Prostate gland (tissue), 2 donors: ENCODE measurements at regions of chr2 and their contacts with region 1.

Region 1: DNA sequence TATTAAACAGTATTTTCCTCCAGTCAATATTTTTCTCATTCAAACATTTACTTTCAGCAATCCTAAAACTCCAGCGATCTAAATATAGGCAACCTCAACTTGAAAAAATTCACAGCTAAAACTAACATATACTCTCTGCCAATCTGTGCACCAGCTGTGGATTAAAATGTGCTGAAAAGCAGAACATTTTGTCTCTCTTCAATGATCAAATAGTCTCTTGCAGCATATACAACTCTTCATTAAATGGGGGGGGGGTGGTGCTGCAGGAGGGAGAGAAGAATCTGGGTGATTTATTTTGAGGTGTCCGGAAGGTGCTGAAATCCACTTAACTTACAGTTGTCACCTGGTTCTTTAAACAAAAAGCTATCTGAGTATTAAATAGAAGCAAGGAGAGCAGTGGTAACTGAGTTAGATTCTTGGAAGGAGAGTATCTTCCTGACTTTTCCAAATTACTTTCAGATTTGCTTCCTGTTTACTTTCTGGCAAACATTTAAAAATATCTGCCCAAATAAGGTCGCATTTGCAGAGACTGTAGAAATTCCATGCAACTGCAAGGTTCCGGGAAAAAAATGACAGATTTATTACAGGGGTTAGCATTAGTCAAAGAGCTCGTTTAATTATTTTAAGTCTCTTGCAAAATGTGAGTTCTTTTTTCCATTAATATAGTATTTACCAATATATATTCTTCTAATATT is 904.7 kb upstream of the ACVR2A start:
- DNase-seq: no peak
- H3K4me3 ChIP-seq: no peak overlapping the region
- H3K27ac ChIP-seq: no peak overlapping the region
- H3K4me1 ChIP-seq: no peaks in the 10 kb centered on the region
- H3K27me3 ChIP-seq: no peaks in the 10 kb centered on the region
- CTCF ChIP-seq: no peak
- POLR2A ChIP-seq: no peak

Region 2: GRCh38 chr2:147030966-147031720 is 91.0 kb after region 1 on chr2:
- intact Hi-C with region 1: loop called (anchors 10 kb)
- DNase-seq: peak; percentile 11
- H3K4me3 ChIP-seq: no peak overlapping the region
- H3K27ac ChIP-seq: peak overlapping the region in 1 of 2 donors; percentile 6
- H3K4me1 ChIP-seq: no peaks in the 10 kb centered on the region
- H3K27me3 ChIP-seq: no peaks in the 10 kb centered on the region
- CTCF ChIP-seq: no peak
- POLR2A ChIP-seq: no peak

Region 3: GRCh38 chr2:147843864-147844696 is 903.9 kb after region 1 on chr2:
- intact Hi-C with region 1: loop called (anchors 10 kb)
- DNase-seq: peak; percentile 90
- H3K4me3 ChIP-seq: peak overlapping the region; percentile 48 to 79
- H3K27ac ChIP-seq: peak overlapping the region; percentile 91 to 99
- H3K4me1 ChIP-seq: no peaks in the 10 kb centered on the region
- H3K27me3 ChIP-seq: no peaks in the 10 kb centered on the region
- CTCF ChIP-seq: peak in 2 of 4 experiments; percentile 24 to 51
- POLR2A ChIP-seq: peak; percentile 29